ENCODE measurements at regions of chr22 and their contacts with region 1.

Region 1: DNA sequence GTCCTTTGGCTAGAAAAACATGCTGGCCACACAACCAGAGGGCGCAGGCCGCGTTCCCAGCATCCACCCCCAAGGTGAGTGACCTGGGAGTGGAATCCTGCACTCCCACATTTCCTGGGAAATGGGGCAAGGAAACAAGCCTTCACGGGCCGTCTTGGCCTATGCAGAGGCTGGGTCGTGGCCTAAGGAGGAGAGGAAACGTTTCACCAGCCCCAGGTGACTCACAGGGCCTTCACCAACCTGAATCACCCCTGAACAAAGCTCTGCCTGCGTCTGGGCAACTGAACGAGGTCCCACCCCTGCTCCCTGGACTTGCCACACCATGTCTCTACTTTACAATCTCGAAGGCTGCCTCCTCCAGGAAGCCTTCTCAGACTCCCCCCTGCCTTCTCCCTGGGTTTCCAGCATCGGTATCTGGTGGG is 13.2 kb downstream of the MYH9 start:
- DNase-seq: no peak
- H3K4me3 ChIP-seq: no peak overlapping the region
- H3K27ac ChIP-seq: peak overlapping the region; percentile 38; the same call in 1 of the 2 replicates
- H3K4me1 ChIP-seq: peaks cover 7 to 30% (median 19%) of the 10 kb centered on the region in 4 experiments
- H3K27me3 ChIP-seq: no peaks in the 10 kb centered on the region
- CTCF ChIP-seq: no peak
- EP300 ChIP-seq: no peak
- POLR2A ChIP-seq: no peak
- RAD21 ChIP-seq: no peak

Region 2: GRCh38 chr22:36387752-36388518 is 13.3 kb after region 1 on chr22 and contains the start of gene MYH9:
- CTCF ChIA-PET with region 1: interaction called, 3 read pairs
- POLR2A ChIA-PET with region 1: interaction called, 263 read pairs
- DNase-seq: peak; percentile 99 to 100
- H3K4me3 ChIP-seq: peak within 1 kb of the TSS; percentile 52 to 98 (median 86)
- H3K27ac ChIP-seq: peak within 1 kb of the TSS; percentile 79; the same call in 1 of the 2 replicates
- H3K4me1 ChIP-seq: peaks cover 0 to 16% (median 5%) of the 10 kb centered on the region in 4 experiments; a peak in 6 of 7 replicates
- H3K27me3 ChIP-seq: no peaks in the 10 kb centered on the region
- CTCF ChIP-seq: no peak
- EP300 ChIP-seq: no peak
- POLR2A ChIP-seq: peak; percentile 94 to 95
- RAD21 ChIP-seq: no peak
- total RNA-seq, gene MYH9: 295 and 322 TPM in 2 replicates

Region 3: GRCh38 chr22:36398621-36399469 is 24.2 kb after region 1 on chr22:
- CTCF ChIA-PET with region 1: no interaction called
- POLR2A ChIA-PET with region 1: no interaction called
- DNase-seq: no peak
- H3K4me3 ChIP-seq: no peak overlapping the region
- H3K27ac ChIP-seq: no peak overlapping the region
- H3K4me1 ChIP-seq: peaks cover 0 to 5% (median 2%) of the 10 kb centered on the region in 4 experiments; a peak in 4 of 7 replicates
- H3K27me3 ChIP-seq: no peaks in the 10 kb centered on the region
- CTCF ChIP-seq: no peak
- EP300 ChIP-seq: no peak
- POLR2A ChIP-seq: no peak
- RAD21 ChIP-seq: no peak

Region 4: GRCh38 chr22:36506637-36507517 is 132.3 kb after region 1 on chr22 and contains the start of gene FOXRED2:
- CTCF ChIA-PET with region 1: no interaction called
- POLR2A ChIA-PET with region 1: no interaction called
- DNase-seq: peak; percentile 39 to 94
- H3K4me3 ChIP-seq: peak within 1 kb of the TSS in 3 of 4 experiments; percentile 33 to 58 (median 39); a peak in 6 of 8 replicates
- H3K27ac ChIP-seq: no peak within 1 kb of the TSS; the same call in 1 of the 2 replicates
- H3K4me1 ChIP-seq: peaks cover 0 to 5% (median 0%) of the 10 kb centered on the region in 4 experiments; a peak in 1 of 7 replicates
- H3K27me3 ChIP-seq: peaks cover 0 to 11% (median 6%) of the 10 kb centered on the region in 4 experiments; a peak in 4 of 7 replicates
- CTCF ChIP-seq: 0 out of 4 replicates have a peak, but pooled peaks of 1 of the 3 experiments have one; percentile 0
- EP300 ChIP-seq: no peak
- POLR2A ChIP-seq: peak in 1 of 2 experiments; percentile 72; a peak in 2 of 3 replicates
- RAD21 ChIP-seq: no peak
- total RNA-seq, gene FOXRED2: 27.8 and 31.5 TPM in 2 replicates

Measured in H1 (cell line).